Mammary epithelial cell (primary cell): ENCODE measurements at regions of chr10 and their contacts with region 1.

Region 1: DNA sequence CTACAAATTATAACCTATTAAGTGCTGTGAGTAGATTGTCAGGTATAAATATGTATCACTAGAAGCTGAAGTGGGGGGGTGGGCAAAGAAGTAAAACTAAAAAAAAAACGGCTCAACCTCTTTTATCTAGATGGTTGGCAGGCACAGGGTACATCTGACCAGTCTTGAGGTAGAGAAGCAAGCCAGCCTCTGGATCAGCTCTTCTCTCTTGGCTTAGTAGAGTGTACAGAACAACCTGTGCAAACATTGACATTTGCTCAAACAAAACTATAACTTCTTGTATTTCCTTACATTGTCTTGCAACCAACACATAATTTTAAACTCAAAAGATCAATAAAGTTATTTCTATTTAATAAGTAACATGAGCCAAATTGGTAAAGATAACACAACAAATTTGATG is 25.6 kb downstream of the DNA2 start:
- DNase-seq: no peak
- H3K4me3 ChIP-seq: no peak overlapping the region
- H3K27ac ChIP-seq: no peak overlapping the region
- H3K4me1 ChIP-seq: no peaks in the 10 kb centered on the region
- H3K27me3 ChIP-seq: no peaks in the 10 kb centered on the region
- CTCF ChIP-seq: no peak

Region 2: DNA sequence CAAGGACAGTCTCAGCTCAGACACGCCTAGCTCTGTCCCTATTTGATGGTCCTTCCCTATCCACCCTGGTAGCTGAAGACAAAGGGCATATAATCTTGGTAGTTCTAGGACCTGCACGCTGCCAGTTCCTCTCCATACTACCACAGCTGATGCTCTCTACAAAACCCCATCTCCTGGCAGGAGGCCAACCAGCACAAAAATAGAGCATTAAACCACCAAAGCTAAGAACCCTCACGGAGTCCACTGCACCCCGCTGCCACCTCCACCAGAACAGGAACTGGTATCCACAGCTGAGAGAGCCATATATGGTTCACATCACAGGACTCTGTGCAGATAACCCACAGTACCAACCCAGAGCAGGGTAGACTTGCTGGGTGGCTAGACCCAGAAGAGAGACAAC is 1221.0 kb before region 1 on chr10:
- CTCF ChIA-PET with region 1: no interaction called
- dilution Hi-C with region 1: no loop called
- in situ Hi-C with region 1: no loop called
- intact Hi-C with region 1: no loop called
- DNase-seq: no peak
- H3K4me3 ChIP-seq: no peak overlapping the region
- H3K27ac ChIP-seq: no peak overlapping the region
- H3K4me1 ChIP-seq: no peaks in the 10 kb centered on the region
- H3K27me3 ChIP-seq: no peaks in the 10 kb centered on the region
- CTCF ChIP-seq: no peak

Region 3: GRCh38 chr10:67629461-67629971 is 816.7 kb before region 1 on chr10:
- CTCF ChIA-PET with region 1: no interaction called
- dilution Hi-C with region 1: no loop called
- in situ Hi-C with region 1: no loop called
- intact Hi-C with region 1: no loop called
- DNase-seq: peak; percentile 30
- H3K4me3 ChIP-seq: no peak overlapping the region
- H3K27ac ChIP-seq: no peak overlapping the region
- H3K4me1 ChIP-seq: no peaks in the 10 kb centered on the region
- H3K27me3 ChIP-seq: no peaks in the 10 kb centered on the region
- CTCF ChIP-seq: no peak

Region 4: GRCh38 chr10:68110027-68110426 is 336.2 kb before region 1 on chr10:
- CTCF ChIA-PET with region 1: no interaction called
- dilution Hi-C with region 1: no loop called
- in situ Hi-C with region 1: no loop called
- intact Hi-C with region 1: no loop called
- DNase-seq: no peak
- H3K4me3 ChIP-seq: no peak overlapping the region
- H3K27ac ChIP-seq: no peak overlapping the region
- H3K4me1 ChIP-seq: peaks cover 20% of the 10 kb centered on the region
- H3K27me3 ChIP-seq: no peaks in the 10 kb centered on the region
- CTCF ChIP-seq: no peak

Region 5: GRCh38 chr10:68489919-68490318 is 43.7 kb after region 1 on chr10:
- CTCF ChIA-PET with region 1: interaction called, 11 read pairs
- dilution Hi-C with region 1: no loop called
- in situ Hi-C with region 1: no loop called
- intact Hi-C with region 1: no loop called
- DNase-seq: no peak
- H3K4me3 ChIP-seq: no peak overlapping the region
- H3K27ac ChIP-seq: no peak overlapping the region
- H3K4me1 ChIP-seq: no peaks in the 10 kb centered on the region
- H3K27me3 ChIP-seq: no peaks in the 10 kb centered on the region
- CTCF ChIP-seq: no peak

Region 6: DNA sequence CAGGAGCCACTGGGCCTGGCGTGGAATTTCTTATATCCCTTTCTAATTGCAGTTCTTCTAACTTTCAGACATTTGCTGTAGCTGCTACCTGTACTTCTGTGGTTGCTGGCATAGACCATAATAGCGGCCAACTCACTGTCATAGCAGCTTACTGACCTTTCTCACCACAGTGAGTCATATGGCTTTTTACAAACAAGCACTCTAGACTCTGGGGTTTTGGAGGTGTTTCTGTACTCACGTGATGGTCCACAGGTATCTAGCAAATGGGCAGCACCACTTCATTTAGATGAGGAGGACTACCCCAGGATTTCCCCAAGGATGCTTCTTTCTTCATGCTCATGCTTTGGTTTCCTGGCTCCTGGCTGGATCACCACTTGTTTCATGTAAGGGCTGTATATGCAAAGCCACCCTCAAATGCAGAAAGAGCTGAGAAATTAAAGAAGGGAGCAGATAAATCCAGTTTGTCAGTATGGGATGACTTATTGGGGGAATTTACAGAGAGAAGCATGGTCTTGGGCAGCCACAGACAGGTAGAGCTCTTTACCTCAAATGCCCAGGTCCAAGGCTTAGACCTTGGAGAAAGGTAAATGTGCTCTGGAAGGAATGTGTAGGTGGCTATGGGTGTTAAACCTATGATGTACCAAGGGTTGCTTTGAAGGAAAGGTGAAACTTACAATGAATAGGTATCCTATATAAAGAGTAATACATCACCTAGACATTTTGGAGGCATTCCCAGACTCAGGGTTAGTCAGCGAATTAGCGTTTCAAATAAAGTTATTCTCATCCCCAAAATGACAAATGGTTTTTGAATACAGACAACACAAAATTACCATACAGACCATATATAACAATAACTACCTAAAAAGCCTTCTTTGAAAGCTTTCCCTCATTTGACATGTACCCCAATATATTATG is 97.1 kb after region 1 on chr10:
- CTCF ChIA-PET with region 1: no interaction called
- dilution Hi-C with region 1: no loop called
- in situ Hi-C with region 1: no loop called
- intact Hi-C with region 1: no loop called
- DNase-seq: peak; percentile 96
- H3K4me3 ChIP-seq: no peak overlapping the region
- H3K27ac ChIP-seq: no peak overlapping the region
- H3K4me1 ChIP-seq: peaks cover 15% of the 10 kb centered on the region
- H3K27me3 ChIP-seq: no peaks in the 10 kb centered on the region
- CTCF ChIP-seq: no peak